Endothelial cell of umbilical vein (primary cell): ENCODE measurements at regions of chr14 and their contacts with region 1.

Region 1: GRCh38 chr14:102591889-102592763 is at the start of gene RCOR1:
- DNase-seq: peak; percentile 96
- H3K4me3 ChIP-seq: peak within 1 kb of the TSS; percentile 84 to 100 (median 87)
- H3K27ac ChIP-seq: peak within 1 kb of the TSS; percentile 95
- H3K4me1 ChIP-seq: peaks cover 20% of the 10 kb centered on the region
- H3K27me3 ChIP-seq: no peaks in the 10 kb centered on the region
- CTCF ChIP-seq: no peak
- POLR2A ChIP-seq: peak; percentile 91
- total RNA-seq, gene RCOR1: 31.8 and 32.2 TPM in 2 replicates

Region 2: GRCh38 chr14:102387086-102387485 is 205.0 kb before region 1 on chr14:
- CTCF ChIA-PET with region 1: no interaction called
- POLR2A ChIA-PET with region 1: no interaction called
- dilution Hi-C with region 1: no loop called
- intact Hi-C with region 1: no loop called
- DNase-seq: no peak
- H3K4me3 ChIP-seq: no peak overlapping the region
- H3K27ac ChIP-seq: no peak overlapping the region
- H3K4me1 ChIP-seq: peaks cover 13% of the 10 kb centered on the region
- H3K27me3 ChIP-seq: no peaks in the 10 kb centered on the region
- CTCF ChIP-seq: no peak
- POLR2A ChIP-seq: no peak

Region 3: DNA sequence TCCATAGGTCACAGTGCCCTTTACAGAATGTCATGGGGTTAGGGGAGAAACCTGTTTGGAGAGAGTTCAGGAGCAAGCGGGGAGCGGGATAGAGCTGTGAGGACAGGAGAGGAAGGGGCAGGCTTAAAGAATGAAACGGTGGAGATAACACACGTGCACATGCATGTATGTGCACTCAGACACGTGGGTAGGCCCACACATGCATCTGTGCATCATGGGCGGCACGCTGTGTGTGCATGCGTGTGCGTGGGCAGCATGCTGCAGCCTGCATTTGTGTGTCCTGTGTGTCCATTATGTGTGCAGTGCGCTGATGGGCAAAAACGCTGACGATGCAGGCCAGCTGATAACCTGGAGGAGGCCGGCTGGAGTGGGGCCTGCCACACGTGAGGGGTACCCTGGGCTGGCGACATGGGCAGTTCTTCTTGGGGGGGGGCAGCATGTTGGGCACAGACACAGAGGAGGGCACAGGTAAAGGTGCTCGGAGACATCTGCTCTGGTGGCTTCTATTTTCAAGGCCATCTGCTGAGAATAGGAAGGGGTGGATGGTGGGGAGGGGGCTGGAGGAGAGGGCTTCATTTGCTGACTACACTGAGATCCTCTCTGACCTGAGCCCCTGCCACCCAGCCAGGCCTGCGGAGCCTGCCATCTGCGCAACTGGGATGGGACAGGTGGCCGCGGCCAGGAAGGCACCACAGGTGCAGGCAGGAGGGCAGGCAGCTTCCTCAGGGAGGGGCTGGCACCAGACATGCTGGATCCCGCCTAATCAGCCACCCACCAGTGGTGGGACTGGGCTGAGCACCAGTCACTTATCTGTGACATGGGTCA is 78.0 kb before region 1 on chr14:
- CTCF ChIA-PET with region 1: no interaction called
- POLR2A ChIA-PET with region 1: no interaction called
- dilution Hi-C with region 1: no loop called
- intact Hi-C with region 1: no loop called
- DNase-seq: no peak
- H3K4me3 ChIP-seq: no peak overlapping the region
- H3K27ac ChIP-seq: no peak overlapping the region
- H3K4me1 ChIP-seq: no peaks in the 10 kb centered on the region
- H3K27me3 ChIP-seq: no peaks in the 10 kb centered on the region
- CTCF ChIP-seq: no peak
- POLR2A ChIP-seq: no peak

Region 4: DNA sequence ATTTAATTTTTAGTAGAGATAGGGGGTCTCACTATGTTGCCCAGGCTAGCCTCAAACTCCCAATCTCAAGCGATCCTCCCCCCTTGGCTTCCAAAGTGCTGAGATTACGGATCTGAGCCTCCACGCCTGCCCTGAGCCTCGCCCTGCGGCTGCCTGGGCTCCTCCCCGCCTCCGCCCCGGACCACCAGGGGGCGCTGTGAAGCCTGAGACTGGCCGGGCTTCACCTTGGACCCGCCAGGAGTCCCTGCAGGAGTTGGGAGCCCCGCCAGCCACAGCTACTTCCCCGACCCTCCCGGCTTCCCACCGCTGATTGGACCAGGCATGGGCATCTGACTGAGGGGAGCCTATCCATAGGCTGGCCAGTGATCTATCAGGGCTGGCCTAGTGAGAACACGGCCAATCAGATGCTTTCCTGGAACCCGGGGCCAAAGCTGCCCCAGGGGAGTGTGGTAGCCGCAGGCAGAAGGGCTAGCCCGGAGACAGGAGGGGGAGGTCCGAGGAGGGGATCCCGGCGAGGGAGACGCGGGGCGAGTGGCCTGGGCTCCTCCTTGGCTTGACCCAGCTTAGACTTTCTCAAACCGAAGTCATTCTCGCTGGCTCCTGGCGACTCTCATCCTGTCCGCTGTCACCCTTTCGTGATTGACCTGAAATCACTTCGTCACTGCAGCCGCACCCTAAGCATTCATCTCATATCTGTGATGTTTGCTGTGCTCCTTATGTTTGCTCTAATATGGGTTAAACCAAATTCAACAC is 67.5 kb before region 1 on chr14:
- CTCF ChIA-PET with region 1: interaction called, 40 read pairs
- POLR2A ChIA-PET with region 1: interaction called, 3 read pairs
- dilution Hi-C with region 1: no loop called
- intact Hi-C with region 1: loop called (anchors 1 kb)
- DNase-seq: peak; percentile 98
- H3K4me3 ChIP-seq: peak overlapping the region; percentile 16 to 57 (median 45)
- H3K27ac ChIP-seq: no peak overlapping the region
- H3K4me1 ChIP-seq: peaks cover 28% of the 10 kb centered on the region
- H3K27me3 ChIP-seq: no peaks in the 10 kb centered on the region
- CTCF ChIP-seq: peak; percentile 98 to 100
- POLR2A ChIP-seq: peak; percentile 90

Region 5: DNA sequence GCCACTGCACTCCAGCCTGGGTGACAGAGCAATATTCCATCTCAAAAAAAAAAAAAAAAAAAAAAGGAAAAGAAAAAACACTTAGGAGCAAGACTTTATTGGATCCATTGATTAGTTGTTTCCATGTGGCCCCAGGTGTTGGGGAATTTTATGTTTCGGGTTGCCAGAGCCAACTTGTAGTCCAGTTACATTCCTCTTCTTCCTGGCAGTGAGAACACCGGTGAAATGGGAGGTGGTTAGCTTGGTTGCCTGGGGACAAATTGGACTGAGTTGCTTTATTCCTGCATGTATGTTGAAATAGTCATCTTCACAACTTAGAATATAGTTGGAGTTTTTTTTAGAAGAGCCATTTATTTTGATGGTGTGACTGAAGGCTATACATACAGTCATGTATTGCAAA is 12.9 kb after region 1 on chr14:
- CTCF ChIA-PET with region 1: interaction called, 24 read pairs
- POLR2A ChIA-PET with region 1: no interaction called
- dilution Hi-C with region 1: no loop called
- intact Hi-C with region 1: no loop called
- DNase-seq: no peak
- H3K4me3 ChIP-seq: no peak overlapping the region
- H3K27ac ChIP-seq: no peak overlapping the region
- H3K4me1 ChIP-seq: no peaks in the 10 kb centered on the region
- H3K27me3 ChIP-seq: no peaks in the 10 kb centered on the region
- CTCF ChIP-seq: no peak
- POLR2A ChIP-seq: no peak

Region 6: GRCh38 chr14:102629808-102630350 is 37.8 kb after region 1 on chr14:
- CTCF ChIA-PET with region 1: interaction called, 6 read pairs
- POLR2A ChIA-PET with region 1: no interaction called
- dilution Hi-C with region 1: no loop called
- intact Hi-C with region 1: loop called (anchors 1 kb)
- DNase-seq: no peak
- H3K4me3 ChIP-seq: no peak overlapping the region
- H3K27ac ChIP-seq: peak overlapping the region; percentile 77
- H3K4me1 ChIP-seq: peaks cover 34% of the 10 kb centered on the region
- H3K27me3 ChIP-seq: no peaks in the 10 kb centered on the region
- CTCF ChIP-seq: no peak
- POLR2A ChIP-seq: no peak

Region 7: DNA sequence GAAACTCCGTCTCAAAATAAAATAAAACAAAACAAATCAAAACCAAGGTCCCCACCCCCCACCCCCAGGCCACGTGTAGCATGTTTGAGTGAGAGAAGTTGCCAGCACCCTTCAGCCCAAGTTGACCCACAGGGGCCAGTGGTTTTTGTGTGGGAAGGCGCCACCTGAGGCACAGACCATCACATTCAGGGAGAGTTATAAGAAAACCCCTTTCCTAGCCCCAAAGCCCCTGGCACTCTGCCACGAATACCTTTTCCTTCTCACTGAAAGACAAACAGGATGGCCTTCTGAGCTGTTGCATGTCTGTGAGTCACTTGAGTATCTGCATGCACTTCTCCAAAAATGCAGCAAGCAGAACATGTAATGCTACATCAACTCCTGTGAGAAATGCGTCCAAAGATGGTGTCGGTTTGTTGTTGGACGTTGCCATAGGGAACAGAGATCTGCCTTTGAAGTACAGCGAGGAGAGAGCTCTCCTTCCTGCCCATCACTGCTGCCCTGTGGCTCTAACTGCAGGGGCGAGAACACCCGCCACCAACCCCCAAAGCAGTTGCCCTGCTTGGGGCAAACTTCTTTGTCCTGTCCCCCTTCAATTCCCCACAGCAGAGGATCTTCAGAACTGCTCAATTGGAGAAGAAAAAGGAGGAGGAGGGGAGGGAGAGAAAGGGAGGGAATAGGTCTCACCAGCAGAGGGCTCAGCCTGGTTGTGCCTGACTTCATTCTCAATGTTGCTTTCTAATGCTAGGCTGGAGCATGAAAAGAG is 182.4 kb after region 1 on chr14:
- CTCF ChIA-PET with region 1: interaction called, 5 read pairs
- POLR2A ChIA-PET with region 1: no interaction called
- dilution Hi-C with region 1: no loop called
- intact Hi-C with region 1: loop called (anchors 5 kb)
- DNase-seq: peak; percentile 69
- H3K4me3 ChIP-seq: no peak overlapping the region
- H3K27ac ChIP-seq: no peak overlapping the region
- H3K4me1 ChIP-seq: peaks cover 16% of the 10 kb centered on the region
- H3K27me3 ChIP-seq: no peaks in the 10 kb centered on the region
- CTCF ChIP-seq: peak; percentile 66 to 86
- POLR2A ChIP-seq: no peak